ENCODE measurements at regions of chr1 and their contacts with region 1.

Region 1: DNA sequence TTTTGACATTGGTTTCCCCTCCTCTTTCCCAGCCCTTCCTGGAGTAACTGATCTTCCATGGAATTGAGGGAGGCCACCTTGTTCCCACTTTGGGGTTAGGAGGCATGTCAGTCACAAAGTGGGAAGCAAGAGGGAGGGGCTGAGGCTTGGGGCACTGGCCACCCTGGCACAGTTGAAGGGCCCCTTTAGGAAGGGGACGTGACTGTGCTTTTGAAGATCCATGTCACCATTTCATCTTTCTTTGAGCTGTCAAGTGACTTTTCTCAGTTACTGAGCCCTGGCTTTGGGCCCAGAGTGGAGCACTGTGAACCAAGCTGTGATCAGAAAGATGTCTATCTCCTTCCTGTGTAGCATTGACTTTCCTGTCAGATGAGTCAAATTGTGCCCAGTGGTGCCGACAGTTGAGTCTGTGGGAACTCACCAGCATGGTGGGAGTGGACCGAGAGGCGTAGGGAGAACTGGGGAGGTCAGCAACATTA is 38.5 kb upstream of the TDRD10 start:
- DNase-seq: peak; percentile 61
- H3K4me3 ChIP-seq: no peak overlapping the region
- H3K27ac ChIP-seq: peak overlapping the region; percentile 84
- H3K4me1 ChIP-seq: peaks cover 17% of the 10 kb centered on the region
- H3K27me3 ChIP-seq: no peaks in the 10 kb centered on the region
- CTCF ChIP-seq: no peak

Region 2: GRCh38 chr1:154405762-154406571 is 57.6 kb before region 1 on chr1:
- CTCF ChIA-PET with region 1: no interaction called
- POLR2A ChIA-PET with region 1: no interaction called
- intact Hi-C with region 1: loop called (anchors 2 kb)
- DNase-seq: peak; percentile 54
- H3K4me3 ChIP-seq: peak overlapping the region; percentile 50
- H3K27ac ChIP-seq: no peak overlapping the region
- H3K4me1 ChIP-seq: peaks cover 13% of the 10 kb centered on the region
- H3K27me3 ChIP-seq: peaks cover 18% of the 10 kb centered on the region
- CTCF ChIP-seq: 0 out of 2 replicates have a peak, but pooled peaks have one; percentile 24